ENCODE measurements at regions of chr2 and their contacts with region 1.

Region 1: GRCh38 chr2:27356382-27357181 is at the start of gene GTF3C2:
- DNase-seq: peak; percentile 96
- H3K4me3 Mint-ChIP-seq: peak within 1 kb of the TSS; percentile 98
- H3K27ac Mint-ChIP-seq: peak within 1 kb of the TSS; percentile 99
- H3K4me1 Mint-ChIP-seq: peaks cover 51% of the 10 kb centered on the region
- H3K27me3 Mint-ChIP-seq: no peaks in the 10 kb centered on the region
- total RNA-seq, gene GTF3C2: 55.2 to 64.5 TPM

Region 2: GRCh38 chr2:27211829-27212627 is 144.6 kb before region 1 on chr2 and contains the starts of genes ATRAID and SLC5A6:
- CTCF ChIA-PET with region 1: no interaction called
- POLR2A ChIA-PET with region 1: no interaction called
- intact Hi-C with region 1: loop called (anchors 1 kb)
- DNase-seq: peak; percentile 92
- H3K4me3 Mint-ChIP-seq: peak within 1 kb of the TSS; percentile 98
- H3K27ac Mint-ChIP-seq: peak within 1 kb of the TSS; percentile 99
- H3K4me1 Mint-ChIP-seq: peaks cover 48% of the 10 kb centered on the region
- H3K27me3 Mint-ChIP-seq: no peaks in the 10 kb centered on the region
- total RNA-seq, gene ATRAID: 84.0 to 92.7 TPM
- total RNA-seq, gene SLC5A6: 29.2 to 30.2 TPM

Region 3: DNA sequence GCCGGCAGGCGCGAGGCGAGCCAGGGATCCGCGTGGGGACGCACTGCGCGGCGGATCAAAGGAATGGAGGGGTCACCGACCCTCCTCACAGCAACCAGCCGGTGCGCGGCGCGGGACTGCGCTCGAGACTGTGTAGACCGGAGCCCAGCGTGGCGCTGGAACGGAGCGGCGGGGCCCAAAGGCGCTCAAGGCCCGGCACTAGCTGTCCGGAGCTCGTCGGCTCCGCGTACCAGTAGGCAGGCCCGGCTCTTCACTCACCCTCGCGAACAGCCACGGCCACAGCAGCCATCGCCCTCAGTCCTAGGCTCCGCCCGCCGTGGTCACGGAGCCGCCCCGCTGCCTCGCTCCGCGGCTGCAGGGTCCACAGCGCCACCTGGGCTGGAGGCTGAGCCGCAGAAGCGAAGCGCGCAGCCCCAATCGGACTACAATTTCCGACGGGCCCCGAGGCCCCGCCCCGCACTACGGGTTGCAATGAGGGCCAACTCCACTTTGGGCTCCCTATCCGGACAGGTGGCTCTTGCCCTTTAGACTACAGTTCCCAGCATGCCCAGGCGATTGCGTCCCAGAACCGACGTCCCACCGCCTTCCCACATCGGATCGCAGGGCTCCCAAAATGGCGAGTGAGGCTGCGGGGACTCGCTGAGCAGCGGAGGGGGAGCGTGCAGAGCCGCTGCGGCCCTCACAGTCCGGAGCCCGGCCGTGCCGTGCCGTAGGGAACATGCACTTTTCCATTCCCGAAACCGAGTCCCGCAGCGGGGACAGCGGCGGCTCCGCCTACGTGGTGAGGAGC is 13.6 kb after region 1 on chr2 and contains the starts of genes EIF2B4 and SNX17:
- CTCF ChIA-PET with region 1: interaction called, 6 read pairs
- POLR2A ChIA-PET with region 1: interaction called, 27 read pairs
- intact Hi-C with region 1: loop called (anchors 1 kb)
- DNase-seq: peak; percentile 100
- H3K4me3 Mint-ChIP-seq: peak within 1 kb of the TSS; percentile 87
- H3K27ac Mint-ChIP-seq: peak within 1 kb of the TSS; percentile 96
- H3K4me1 Mint-ChIP-seq: peaks cover 29% of the 10 kb centered on the region
- H3K27me3 Mint-ChIP-seq: no peaks in the 10 kb centered on the region
- total RNA-seq, gene EIF2B4: 34.6 to 36.5 TPM
- total RNA-seq, gene SNX17: 91.2 to 93.2 TPM

Region 4: DNA sequence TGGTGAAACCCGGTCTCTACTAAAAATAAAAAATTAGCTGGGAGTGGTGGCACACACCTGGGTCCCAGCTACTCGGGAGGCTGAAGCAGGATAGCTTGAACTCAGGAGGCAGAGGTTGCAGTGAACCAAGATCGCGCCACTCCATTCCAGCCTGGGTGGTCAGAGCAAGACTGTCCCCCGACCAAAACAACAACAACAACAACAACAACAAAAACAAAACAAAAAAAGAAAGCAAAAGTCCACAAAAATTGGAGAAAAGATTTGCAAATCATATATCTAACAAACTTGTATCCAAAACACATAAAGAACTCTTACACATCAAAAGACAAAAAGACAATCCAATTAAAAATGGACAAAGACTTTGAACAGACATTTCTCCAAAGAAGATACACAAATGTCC is 42.4 kb after region 1 on chr2:
- CTCF ChIA-PET with region 1: no interaction called
- POLR2A ChIA-PET with region 1: no interaction called
- intact Hi-C with region 1: no loop called
- DNase-seq: no peak
- H3K4me3 Mint-ChIP-seq: no peak overlapping the region
- H3K27ac Mint-ChIP-seq: peak overlapping the region; percentile 29
- H3K4me1 Mint-ChIP-seq: peaks cover 28% of the 10 kb centered on the region
- H3K27me3 Mint-ChIP-seq: no peaks in the 10 kb centered on the region

Region 5: GRCh38 chr2:27409321-27410073 is 52.9 kb after region 1 on chr2 and contains the start of gene PPM1G:
- CTCF ChIA-PET with region 1: no interaction called
- POLR2A ChIA-PET with region 1: interaction called, 7 read pairs
- intact Hi-C with region 1: loop called (anchors 1 kb)
- DNase-seq: peak; percentile 98
- H3K4me3 Mint-ChIP-seq: peak within 1 kb of the TSS; percentile 88
- H3K27ac Mint-ChIP-seq: peak within 1 kb of the TSS; percentile 87
- H3K4me1 Mint-ChIP-seq: peaks cover 32% of the 10 kb centered on the region
- H3K27me3 Mint-ChIP-seq: no peaks in the 10 kb centered on the region
- total RNA-seq, gene PPM1G: 127 to 132 TPM

Region 6: DNA sequence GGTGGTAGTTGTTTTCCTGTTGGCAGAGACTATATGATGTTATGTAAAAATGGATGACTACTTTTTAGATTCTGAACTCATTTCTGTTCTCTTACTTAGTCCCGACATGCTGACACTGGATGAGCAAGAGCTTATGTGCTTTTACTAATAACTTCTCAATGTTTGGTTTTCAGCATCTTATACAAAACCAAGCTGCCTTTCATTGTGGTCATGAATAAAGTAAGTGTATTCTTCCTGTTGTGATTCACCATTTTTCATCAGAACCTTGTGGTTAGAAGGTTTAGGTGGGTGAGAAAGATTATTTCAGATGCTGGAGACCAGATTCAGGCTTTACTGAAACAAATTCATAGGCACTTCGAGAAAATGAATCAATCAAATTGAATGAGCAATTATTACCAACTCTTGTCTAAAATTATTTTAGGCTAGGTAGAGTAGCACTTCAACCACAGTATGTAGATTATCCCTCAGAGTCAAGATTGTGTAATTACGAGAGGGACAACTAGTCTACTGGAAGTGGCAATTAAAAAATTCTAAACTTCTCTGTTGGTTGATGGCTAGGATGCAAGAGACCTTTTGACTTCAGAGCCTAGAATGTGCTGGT is 281.6 kb after region 1 on chr2:
- CTCF ChIA-PET with region 1: no interaction called
- POLR2A ChIA-PET with region 1: no interaction called
- intact Hi-C with region 1: loop called (anchors 2 kb)
- DNase-seq: no peak
- H3K4me3 Mint-ChIP-seq: peak overlapping the region; percentile 33
- H3K27ac Mint-ChIP-seq: peak overlapping the region; percentile 99
- H3K4me1 Mint-ChIP-seq: peaks cover 35% of the 10 kb centered on the region
- H3K27me3 Mint-ChIP-seq: no peaks in the 10 kb centered on the region